ENCODE measurements at regions of chr20 and their contacts with region 1.

Region 1: GRCh38 chr20:3795511-3796468 is at the start of gene CDC25B:
- DNase-seq: peak; percentile 68
- H3K4me3 ChIP-seq: peak within 1 kb of the TSS; percentile 82
- H3K27ac ChIP-seq: peak within 1 kb of the TSS; percentile 97
- H3K27me3 ChIP-seq: no peaks in the 10 kb centered on the region
- CTCF ChIP-seq: peak; percentile 52
- polyA plus RNA-seq, gene CDC25B: 57.3 and 58.9 TPM in 2 replicates

Region 2: DNA sequence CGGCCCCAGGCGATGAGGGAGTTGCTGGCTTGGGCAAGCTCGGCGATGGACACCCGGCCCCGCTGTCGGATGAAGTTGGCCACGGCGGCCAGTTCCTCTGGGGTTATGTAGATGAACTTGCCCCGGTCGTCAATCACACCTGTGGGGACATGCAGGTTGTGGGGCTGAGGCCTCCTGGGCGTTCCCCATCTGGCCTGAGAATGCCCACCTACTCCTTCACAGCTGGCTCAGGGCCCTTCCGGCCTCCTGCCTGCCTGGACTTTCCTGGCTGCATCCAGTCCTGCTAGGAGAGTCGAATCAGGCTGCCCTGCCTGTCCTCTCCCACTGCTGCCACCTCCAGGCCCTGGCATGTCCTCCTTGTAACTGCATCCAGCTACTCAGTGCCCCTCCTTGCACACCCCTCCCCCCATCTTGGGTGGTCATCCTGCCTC is 605.1 kb before region 1 on chr20:
- CTCF ChIA-PET with region 1: no interaction called
- POLR2A ChIA-PET with region 1: no interaction called
- DNase-seq: no peak
- H3K4me3 ChIP-seq: no peak overlapping the region
- H3K27ac ChIP-seq: no peak overlapping the region
- H3K27me3 ChIP-seq: no peaks in the 10 kb centered on the region
- CTCF ChIP-seq: no peak

Region 3: GRCh38 chr20:3811467-3812258 is 15.9 kb after region 1 on chr20:
- CTCF ChIA-PET with region 1: interaction called, 3 read pairs
- POLR2A ChIA-PET with region 1: interaction called, 20 read pairs
- DNase-seq: peak; percentile 99
- H3K4me3 ChIP-seq: peak overlapping the region; percentile 46
- H3K27ac ChIP-seq: peak overlapping the region; percentile 94
- H3K27me3 ChIP-seq: no peaks in the 10 kb centered on the region
- CTCF ChIP-seq: no peak

Region 4: DNA sequence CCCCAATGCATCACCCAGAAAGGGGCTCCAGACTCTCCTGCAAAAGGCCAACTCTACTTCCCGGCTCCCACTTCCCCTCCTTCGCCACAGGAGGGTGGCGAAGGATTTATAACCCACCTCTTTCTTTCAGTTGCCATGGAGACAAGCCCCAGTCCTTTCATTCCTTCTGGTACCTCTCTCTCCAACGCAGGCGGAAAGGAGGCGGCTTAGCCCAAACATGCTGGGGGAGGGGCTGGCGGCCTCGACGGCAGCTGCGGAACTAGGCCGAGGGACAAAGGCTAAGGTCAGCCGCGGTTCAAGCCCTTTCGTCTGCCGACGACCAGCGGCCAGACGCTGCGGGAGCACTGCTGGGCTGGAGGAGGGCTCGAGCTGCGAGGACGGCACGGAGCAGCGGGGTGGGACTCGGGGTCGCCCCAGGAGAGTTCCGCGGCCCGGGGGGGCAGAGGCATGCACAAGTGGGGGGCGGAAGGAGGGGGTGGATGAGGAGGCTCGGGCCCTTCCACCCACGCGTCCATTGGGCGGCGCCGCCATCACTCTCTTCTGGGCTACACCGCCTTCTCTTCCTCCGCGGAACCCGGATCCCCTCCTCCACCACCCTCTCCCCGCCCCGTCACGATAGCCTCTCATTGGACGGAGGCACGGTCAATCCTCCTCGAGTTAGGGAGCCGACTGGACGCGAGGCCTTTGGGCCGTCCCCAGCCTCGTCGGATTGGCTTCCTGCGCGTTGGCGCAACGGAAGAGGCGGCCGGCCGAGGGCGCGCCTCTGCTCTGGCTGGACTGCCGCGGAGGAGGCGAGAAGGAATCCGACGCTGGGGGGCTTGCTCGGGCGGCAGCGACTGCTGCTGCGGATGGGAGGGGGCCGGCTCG is 93.1 kb after region 1 on chr20 and contains the start of gene PANK2:
- CTCF ChIA-PET with region 1: no interaction called
- POLR2A ChIA-PET with region 1: no interaction called
- DNase-seq: peak; percentile 98
- H3K4me3 ChIP-seq: peak within 1 kb of the TSS; percentile 92
- H3K27ac ChIP-seq: peak within 1 kb of the TSS; percentile 86
- H3K27me3 ChIP-seq: no peaks in the 10 kb centered on the region
- CTCF ChIP-seq: peak; percentile 58
- polyA plus RNA-seq, gene PANK2: 24.9 and 32.2 TPM in 2 replicates

Measured in AG04450 (cell line).